CD4-positive, alpha-beta memory T cell (primary cell): ENCODE measurements at regions of chr3 and their contacts with region 1.

Region 1: GRCh38 chr3:13414040-13414729 is 5.9 kb downstream of the NUP210 start:
- DNase-seq: peak; percentile 75 to 86 (median 78)
- H3K4me3 ChIP-seq: peak overlapping the region; percentile 26 to 58
- H3K4me3 Mint-ChIP-seq: peak overlapping the region; percentile 78 to 96 (median 87)
- H3K27ac ChIP-seq: peak overlapping the region; percentile 90
- H3K27ac Mint-ChIP-seq: peak overlapping the region; percentile 94 to 99 (median 97)
- H3K4me1 ChIP-seq: peaks cover 72% of the 10 kb centered on the region
- H3K4me1 Mint-ChIP-seq: peaks cover 47 to 70% (median 57%) of the 10 kb centered on the region in 4 donors
- H3K27me3 ChIP-seq: no peaks in the 10 kb centered on the region
- H3K27me3 Mint-ChIP-seq: no peaks in the 10 kb centered on the region

Region 2: DNA sequence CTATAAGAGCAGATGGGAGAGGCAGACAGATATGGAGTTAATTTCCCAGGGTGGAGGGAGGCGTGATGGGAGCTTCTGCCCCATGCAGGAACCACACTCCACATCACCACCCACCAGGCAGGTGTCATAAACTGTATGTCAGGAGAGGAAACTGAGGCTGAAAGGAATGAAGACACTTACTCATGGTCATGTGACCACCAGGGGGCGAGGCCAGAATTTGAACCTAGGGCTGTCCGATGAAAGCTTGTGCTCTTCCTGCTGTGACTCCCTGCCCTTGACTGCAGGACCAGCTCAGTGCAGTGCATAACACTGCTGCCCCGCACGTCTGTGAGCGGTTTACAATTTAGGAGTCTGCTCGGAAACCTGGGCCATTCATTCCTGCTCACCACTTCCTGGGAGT is 22.9 kb before region 1 on chr3:
- CTCF ChIA-PET with region 1: interaction called, 31 read pairs
- POLR2A ChIA-PET with region 1: interaction called, 19 read pairs
- intact Hi-C with region 1: loop called (anchors 2 kb)
- DNase-seq: peak in 4 of 5 donors; percentile 19 to 28 (median 22)
- H3K4me3 ChIP-seq: no peak overlapping the region
- H3K4me3 Mint-ChIP-seq: no peak overlapping the region
- H3K27ac ChIP-seq: no peak overlapping the region
- H3K27ac Mint-ChIP-seq: peak overlapping the region in 6 of 7 donors; percentile 30 to 92 (median 65)
- H3K4me1 ChIP-seq: peaks cover 3% of the 10 kb centered on the region
- H3K4me1 Mint-ChIP-seq: peaks cover 8 to 30% (median 15%) of the 10 kb centered on the region in 4 donors
- H3K27me3 ChIP-seq: no peaks in the 10 kb centered on the region
- H3K27me3 Mint-ChIP-seq: no peaks in the 10 kb centered on the region

Region 3: GRCh38 chr3:13427662-13428603 is 13.7 kb after region 1 on chr3:
- CTCF ChIA-PET with region 1: interaction called, 33 read pairs
- POLR2A ChIA-PET with region 1: interaction called, 86 read pairs
- intact Hi-C with region 1: loop called (anchors 1 kb)
- DNase-seq: peak; percentile 57 to 75 (median 64)
- H3K4me3 ChIP-seq: peak overlapping the region in 1 of 2 donors; percentile 7
- H3K4me3 Mint-ChIP-seq: peak overlapping the region; percentile 38 to 84 (median 68)
- H3K27ac ChIP-seq: peak overlapping the region; percentile 43
- H3K27ac Mint-ChIP-seq: peak overlapping the region; percentile 81 to 95 (median 88)
- H3K4me1 ChIP-seq: peaks cover 47% of the 10 kb centered on the region
- H3K4me1 Mint-ChIP-seq: peaks cover 19 to 58% (median 38%) of the 10 kb centered on the region in 4 donors
- H3K27me3 ChIP-seq: no peaks in the 10 kb centered on the region
- H3K27me3 Mint-ChIP-seq: no peaks in the 10 kb centered on the region